Body of pancreas (tissue), 4 donors: ENCODE measurements at regions of chr17 and their contacts with region 1.

Region 1: DNA sequence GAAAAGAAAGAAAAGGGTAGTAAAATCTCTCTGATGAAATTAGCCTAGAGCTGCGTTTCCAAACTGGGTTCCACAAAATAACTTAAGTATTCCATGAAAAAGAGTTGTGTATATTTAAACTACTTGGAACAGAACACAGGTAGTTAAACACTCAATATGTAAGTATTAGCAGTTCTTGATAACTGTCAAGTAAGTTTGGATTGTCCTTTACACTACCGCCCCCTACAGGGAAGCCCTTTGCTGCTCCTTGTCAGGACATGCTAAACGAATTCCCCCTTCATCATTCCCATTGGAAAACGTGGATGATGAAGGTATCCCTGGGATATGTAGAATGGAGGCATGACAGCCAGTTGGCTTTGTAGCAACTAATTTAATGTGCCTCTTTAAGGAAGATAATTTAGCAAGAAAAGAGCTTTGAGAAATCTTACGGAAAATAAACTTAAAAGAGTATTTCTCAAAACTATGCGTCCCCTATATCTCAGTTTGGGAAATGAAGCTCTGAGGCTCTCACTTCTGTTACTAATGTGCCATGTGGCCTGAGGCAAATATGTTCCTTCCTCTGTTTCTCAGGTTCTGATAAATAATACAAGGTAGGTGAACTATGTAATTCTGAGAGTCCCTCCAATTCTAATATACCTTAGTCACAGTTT is 18.8 kb downstream of the NCBP3 start:
- DNase-seq: peak; percentile 51 to 78 (median 74)
- ATAC-seq: peak; percentile 48
- H3K4me3 ChIP-seq: no peak overlapping the region
- H3K27ac ChIP-seq: no peak overlapping the region
- H3K4me1 ChIP-seq: no peaks in the 10 kb centered on the region
- H3K27me3 ChIP-seq: no peaks in the 10 kb centered on the region
- CTCF ChIP-seq: peak; percentile 23 to 69 (median 51)
- POLR2A ChIP-seq: no peak

Region 2: GRCh38 chr17:3738562-3739295 is 88.5 kb before region 1 on chr17:
- intact Hi-C with region 1: loop called (anchors 10 kb)
- DNase-seq: peak; percentile 74 to 85 (median 82)
- ATAC-seq: peak; percentile 77
- H3K4me3 ChIP-seq: no peak overlapping the region
- H3K27ac ChIP-seq: peak overlapping the region in 3 of 4 donors; percentile 72 to 78 (median 75)
- H3K4me1 ChIP-seq: peaks cover 19% of the 10 kb centered on the region
- H3K27me3 ChIP-seq: no peaks in the 10 kb centered on the region
- CTCF ChIP-seq: peak in 1 of 7 experiments; percentile 3
- POLR2A ChIP-seq: peak in 2 of 3 donors; percentile 37 to 47

Region 3: GRCh38 chr17:4004517-4005295 is 177.5 kb after region 1 on chr17:
- intact Hi-C with region 1: no loop called
- DNase-seq: peak; percentile 58 to 68 (median 62)
- ATAC-seq: peak; percentile 65
- H3K4me3 ChIP-seq: no peak overlapping the region
- H3K27ac ChIP-seq: peak overlapping the region in 3 of 4 donors; percentile 49 to 72 (median 68)
- H3K4me1 ChIP-seq: peaks cover 20% of the 10 kb centered on the region
- H3K27me3 ChIP-seq: no peaks in the 10 kb centered on the region
- CTCF ChIP-seq: peak; percentile 71 to 95 (median 87)
- POLR2A ChIP-seq: no peak

Region 4: DNA sequence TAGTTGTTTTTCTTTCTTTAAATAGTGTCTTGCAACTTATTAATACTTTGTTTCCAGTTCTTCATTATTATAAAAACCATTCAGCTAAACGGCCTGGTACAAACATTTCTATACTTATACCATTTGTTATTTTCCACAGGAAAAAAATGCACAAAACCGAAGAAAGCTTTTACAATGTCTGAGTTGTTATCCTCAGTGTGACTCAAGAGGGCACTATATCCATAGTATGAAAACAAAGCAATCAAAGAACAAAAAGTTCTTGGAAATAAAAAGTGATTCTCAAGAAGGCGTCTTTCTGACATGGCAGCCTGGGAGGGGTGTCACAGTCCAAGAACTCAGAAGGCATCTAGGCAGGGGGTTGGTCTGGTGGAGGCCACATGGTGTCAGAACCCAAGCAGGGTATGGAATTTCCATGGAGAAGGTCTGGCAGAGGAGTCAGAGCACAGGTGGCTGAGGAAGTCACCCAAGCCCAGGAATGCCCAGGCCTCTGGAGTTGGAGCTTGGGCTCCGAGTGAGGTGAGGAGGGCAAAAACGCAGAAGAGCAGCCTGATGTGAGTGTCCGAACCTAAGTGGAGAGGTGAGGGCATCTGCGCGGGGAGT is 207.9 kb after region 1 on chr17:
- intact Hi-C with region 1: no loop called
- DNase-seq: peak in 3 of 4 donors; percentile 28 to 38 (median 32)
- ATAC-seq: peak; percentile 16
- H3K4me3 ChIP-seq: no peak overlapping the region
- H3K27ac ChIP-seq: peak overlapping the region; percentile 66 to 81 (median 73)
- H3K4me1 ChIP-seq: peaks cover 68% of the 10 kb centered on the region
- H3K27me3 ChIP-seq: no peaks in the 10 kb centered on the region
- CTCF ChIP-seq: peak in 5 of 7 experiments; percentile 19 to 46 (median 37)
- POLR2A ChIP-seq: no peak